Spleen (tissue), 13 donors: ENCODE measurements at regions of chr6 and their contacts with region 1.

Region 1: GRCh38 chr6:25485821-25486534 is 166.0 kb upstream of the SCGN start:
- DNase-seq: no peak
- H3K4me3 ChIP-seq: no peak overlapping the region
- H3K27ac ChIP-seq: no peak overlapping the region
- H3K4me1 ChIP-seq: peaks cover 0 to 10% (median 3%) of the 10 kb centered on the region in 6 donors
- H3K27me3 ChIP-seq: no peaks in the 10 kb centered on the region
- CTCF ChIP-seq: no peak
- POLR2A ChIP-seq: no peak

Region 2: GRCh38 chr6:25278914-25279747 is 206.8 kb before region 1 on chr6 and contains the start of gene CARMIL1:
- intact Hi-C with region 1: loop called (anchors 5 kb)
- DNase-seq: peak; percentile 92
- H3K4me3 ChIP-seq: peak within 1 kb of the TSS; percentile 53 to 89 (median 79)
- H3K27ac ChIP-seq: peak within 1 kb of the TSS in 6 of 8 donors; percentile 42 to 79 (median 64)
- H3K4me1 ChIP-seq: peaks cover 3 to 42% (median 21%) of the 10 kb centered on the region in 6 donors
- H3K27me3 ChIP-seq: peaks cover 0 to 18% (median 0%) of the 10 kb centered on the region in 7 donors
- CTCF ChIP-seq: peak; percentile 23 to 81 (median 71)
- POLR2A ChIP-seq: no peak
- total RNA-seq, gene CARMIL1: 7.8 to 34.8 (median 10.1) TPM

Region 3: DNA sequence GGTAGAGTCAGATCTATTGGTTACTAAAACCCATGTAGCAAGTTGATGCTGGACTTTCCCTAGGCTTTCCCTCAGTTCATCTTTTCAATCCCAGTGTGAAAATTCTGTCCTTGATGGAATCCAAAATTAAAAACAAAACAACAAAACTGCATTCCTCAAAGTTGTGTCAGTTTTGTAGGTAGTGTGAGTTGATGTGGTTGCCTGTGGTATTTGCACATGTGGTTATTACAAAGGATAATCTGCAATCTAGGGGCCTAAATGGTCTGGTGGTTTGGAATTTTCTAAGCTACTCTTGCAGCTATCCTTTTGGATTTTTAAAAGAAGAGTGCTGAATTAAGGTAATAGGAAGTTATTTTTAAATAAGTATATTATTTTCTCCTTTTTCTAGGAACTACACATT is 33.9 kb after region 1 on chr6:
- intact Hi-C with region 1: no loop called
- DNase-seq: no peak
- H3K4me3 ChIP-seq: no peak overlapping the region
- H3K27ac ChIP-seq: no peak overlapping the region
- H3K4me1 ChIP-seq: no peaks in the 10 kb centered on the region
- H3K27me3 ChIP-seq: no peaks in the 10 kb centered on the region
- CTCF ChIP-seq: no peak
- POLR2A ChIP-seq: no peak

Region 4: DNA sequence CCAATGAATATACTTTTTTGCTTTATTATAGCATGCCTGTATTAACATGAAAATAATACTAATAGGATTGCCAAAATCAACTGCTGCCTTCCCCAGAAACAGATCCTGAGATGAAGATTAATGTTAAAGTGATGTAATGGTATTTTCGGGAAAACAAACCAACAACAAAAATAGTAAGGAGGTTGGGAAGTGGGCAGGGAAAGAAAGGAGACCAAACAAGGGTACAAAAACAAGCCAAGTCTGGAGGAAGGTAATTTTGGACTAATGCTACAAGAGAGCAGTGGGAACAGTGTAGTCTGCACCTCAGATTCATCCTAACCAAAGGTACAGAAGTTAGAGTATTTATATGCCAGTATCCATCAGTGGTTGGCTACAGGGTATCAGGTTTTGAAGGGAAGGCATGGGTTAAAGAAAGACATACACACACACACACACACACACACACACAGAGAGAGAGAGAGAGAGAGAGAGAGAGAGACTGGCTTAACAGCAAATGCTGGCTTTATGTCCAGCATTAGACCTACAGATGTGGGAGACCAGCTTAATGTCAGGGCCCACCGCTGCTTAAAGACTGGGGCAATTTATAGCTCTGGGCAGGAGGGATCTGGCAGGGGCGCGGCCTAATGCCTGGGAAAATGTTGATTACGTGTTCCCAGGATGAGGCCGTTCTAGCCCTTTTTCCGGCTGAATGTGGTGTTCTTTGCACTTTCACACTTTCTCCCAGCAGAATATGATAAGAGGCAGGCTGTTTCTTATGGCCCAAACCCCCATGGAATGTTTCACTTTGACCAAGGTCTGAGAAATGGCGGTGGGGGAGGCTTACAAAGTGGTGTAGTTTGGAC is 349.7 kb after region 1 on chr6:
- intact Hi-C with region 1: no loop called
- DNase-seq: no peak
- H3K4me3 ChIP-seq: no peak overlapping the region
- H3K27ac ChIP-seq: no peak overlapping the region
- H3K4me1 ChIP-seq: no peaks in the 10 kb centered on the region
- H3K27me3 ChIP-seq: peaks cover 0 to 19% (median 0%) of the 10 kb centered on the region in 7 donors
- CTCF ChIP-seq: no peak
- POLR2A ChIP-seq: no peak